ENCODE measurements at regions of chr17 and their contacts with region 1.

Region 1: GRCh38 chr17:45317112-45317928 is 500 bp upstream of the MAP3K14 start:
- DNase-seq: peak; percentile 98 to 100 (median 99)
- H3K4me3 ChIP-seq: peak overlapping the region; percentile 62 to 94 (median 85)
- H3K27ac ChIP-seq: peak overlapping the region in 56 of 59 donors; percentile 45 to 97 (median 90)
- H3K27me3 ChIP-seq: no peaks in the 10 kb centered on the region
- CTCF ChIP-seq: peak in 28 of 56 donors; percentile 6 to 49 (median 27)

Region 2: DNA sequence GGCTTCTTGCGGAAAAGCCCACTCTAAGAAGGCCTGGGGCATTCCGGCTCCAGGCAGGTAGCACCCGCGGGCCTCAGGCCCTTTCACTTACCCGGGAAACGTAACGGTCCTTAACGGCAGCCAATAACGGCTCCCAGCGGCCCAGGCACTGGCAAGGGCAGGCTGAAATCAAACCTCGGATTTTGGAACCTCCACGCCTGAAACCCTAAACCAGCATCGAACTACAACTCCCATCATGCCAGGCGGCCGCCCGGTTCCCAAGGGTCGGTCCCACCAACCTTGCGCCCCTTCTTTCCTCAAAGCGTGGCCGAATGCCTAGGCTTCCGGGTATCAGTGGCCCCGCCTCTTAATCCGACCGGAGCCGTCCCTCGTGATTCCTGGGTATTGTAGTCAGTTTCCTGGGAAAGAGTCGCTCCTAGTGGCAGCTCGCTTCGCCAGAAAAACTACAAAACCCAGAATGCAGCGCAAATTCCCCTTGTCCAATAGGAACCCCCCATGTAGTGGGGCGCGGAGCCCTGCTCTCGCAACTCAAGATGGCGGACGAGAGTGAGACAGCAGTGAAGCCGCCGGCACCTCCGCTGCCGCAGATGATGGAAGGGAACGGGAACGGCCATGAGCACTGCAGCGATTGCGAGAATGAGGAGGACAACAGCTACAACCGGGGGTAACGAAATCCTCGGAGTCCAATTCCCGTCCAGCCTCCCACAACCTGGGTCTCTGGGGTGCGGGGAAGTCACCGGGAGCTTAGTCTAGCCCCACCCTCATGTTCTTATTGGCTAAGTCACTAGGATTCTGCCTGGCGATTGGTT is 256.3 kb before region 1 on chr17 and contains the start of gene NMT1:
- intact Hi-C with region 1: loop called in 1 of 2 experiments (anchors 10 kb)
- DNase-seq: peak; percentile 96 to 99 (median 99)
- H3K4me3 ChIP-seq: peak within 1 kb of the TSS; percentile 66 to 99 (median 84)
- H3K27ac ChIP-seq: peak within 1 kb of the TSS; percentile 53 to 99 (median 93)
- H3K27me3 ChIP-seq: no peaks in the 10 kb centered on the region
- CTCF ChIP-seq: peak in 41 of 56 donors; percentile 4 to 63 (median 37)
- total RNA-seq, gene NMT1: 111 to 220 (median 159) TPM

Region 3: DNA sequence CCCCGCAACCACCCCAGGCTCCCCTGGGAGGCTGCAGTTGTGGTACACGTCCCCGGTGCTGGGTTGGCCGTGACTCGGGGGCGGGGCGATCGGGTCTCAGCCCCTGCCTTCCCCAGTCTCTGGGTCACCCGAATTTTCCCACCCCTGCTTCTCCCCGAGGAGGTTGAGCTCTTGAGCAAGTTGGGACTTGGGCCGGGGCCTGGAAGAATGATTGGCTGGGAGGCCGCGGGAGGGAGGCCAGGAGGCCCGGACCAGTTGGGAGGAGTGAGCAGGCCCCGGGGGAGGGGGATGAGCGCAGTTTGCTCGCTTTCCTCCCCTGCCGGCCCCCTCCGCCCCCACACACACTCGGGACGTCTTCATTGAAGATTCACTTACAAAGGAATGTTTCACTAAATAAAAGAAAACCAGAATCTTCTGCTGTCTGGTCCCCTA is 173.5 kb before region 1 on chr17:
- intact Hi-C with region 1: no loop called
- DNase-seq: peak in 5 of 10 donors; percentile 44 to 70 (median 61)
- H3K4me3 ChIP-seq: peak overlapping the region; percentile 14 to 71 (median 53)
- H3K27ac ChIP-seq: peak overlapping the region; percentile 25 to 100 (median 89)
- H3K27me3 ChIP-seq: no peaks in the 10 kb centered on the region
- CTCF ChIP-seq: peak in 2 of 56 donors; percentile 5 to 13

Region 4: DNA sequence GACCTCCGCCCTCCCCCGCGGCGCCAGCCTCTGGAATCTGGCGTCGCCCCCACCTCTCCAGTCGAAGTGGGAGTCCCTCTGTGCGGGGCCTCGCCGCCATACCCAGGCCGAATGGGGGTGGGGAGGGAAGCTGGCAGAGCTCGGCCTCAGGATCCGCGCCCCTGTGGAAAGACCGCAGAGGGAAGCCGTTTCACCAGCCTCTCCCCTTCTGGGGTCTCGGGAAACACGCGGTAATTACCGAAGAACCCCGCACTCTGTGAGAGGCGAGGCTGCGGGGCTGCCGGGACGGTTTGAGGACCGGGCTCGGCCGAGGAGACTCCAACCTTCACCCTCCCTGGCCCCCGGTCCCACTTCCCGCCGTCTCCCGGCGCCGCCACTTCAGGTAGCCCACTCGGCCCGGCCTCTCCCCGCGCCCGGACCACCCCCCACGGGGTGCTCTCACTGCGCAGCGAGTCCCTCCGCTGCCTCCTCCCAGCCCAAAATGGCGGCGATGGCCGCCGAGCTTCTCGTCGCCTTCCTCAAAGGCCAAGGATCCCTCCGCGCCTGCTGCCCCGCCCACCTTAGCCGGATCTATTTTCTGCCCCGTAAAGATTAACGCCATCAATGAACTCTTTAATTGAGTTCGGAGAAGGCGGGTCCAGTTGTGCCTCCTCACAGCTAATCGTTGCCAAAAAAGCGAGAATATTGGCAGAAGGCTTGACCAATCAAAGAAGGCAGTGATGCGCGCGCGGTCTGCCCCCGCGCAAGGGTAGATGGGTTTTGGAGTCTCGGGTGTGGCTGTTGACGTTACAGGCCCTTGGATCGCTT is 156.1 kb before region 1 on chr17:
- intact Hi-C with region 1: loop called in 1 of 2 experiments (anchors 10 kb)
- DNase-seq: peak; percentile 98 to 100 (median 99)
- H3K4me3 ChIP-seq: peak overlapping the region; percentile 77 to 100 (median 95)
- H3K27ac ChIP-seq: peak overlapping the region; percentile 98 to 100 (median 100)
- H3K27me3 ChIP-seq: no peaks in the 10 kb centered on the region
- CTCF ChIP-seq: peak in 19 of 56 donors; percentile 3 to 48 (median 22)

Region 5: GRCh38 chr17:45277216-45277849 is 40.0 kb before region 1 on chr17:
- intact Hi-C with region 1: loop called (anchors 2 to 5 kb)
- DNase-seq: peak; percentile 83 to 98 (median 92)
- H3K4me3 ChIP-seq: peak overlapping the region in 9 of 59 donors; percentile 0 to 36 (median 15)
- H3K27ac ChIP-seq: peak overlapping the region in 6 of 59 donors; percentile 2 to 47 (median 35)
- H3K27me3 ChIP-seq: no peaks in the 10 kb centered on the region
- CTCF ChIP-seq: peak; percentile 25 to 90 (median 82)

Region 6: DNA sequence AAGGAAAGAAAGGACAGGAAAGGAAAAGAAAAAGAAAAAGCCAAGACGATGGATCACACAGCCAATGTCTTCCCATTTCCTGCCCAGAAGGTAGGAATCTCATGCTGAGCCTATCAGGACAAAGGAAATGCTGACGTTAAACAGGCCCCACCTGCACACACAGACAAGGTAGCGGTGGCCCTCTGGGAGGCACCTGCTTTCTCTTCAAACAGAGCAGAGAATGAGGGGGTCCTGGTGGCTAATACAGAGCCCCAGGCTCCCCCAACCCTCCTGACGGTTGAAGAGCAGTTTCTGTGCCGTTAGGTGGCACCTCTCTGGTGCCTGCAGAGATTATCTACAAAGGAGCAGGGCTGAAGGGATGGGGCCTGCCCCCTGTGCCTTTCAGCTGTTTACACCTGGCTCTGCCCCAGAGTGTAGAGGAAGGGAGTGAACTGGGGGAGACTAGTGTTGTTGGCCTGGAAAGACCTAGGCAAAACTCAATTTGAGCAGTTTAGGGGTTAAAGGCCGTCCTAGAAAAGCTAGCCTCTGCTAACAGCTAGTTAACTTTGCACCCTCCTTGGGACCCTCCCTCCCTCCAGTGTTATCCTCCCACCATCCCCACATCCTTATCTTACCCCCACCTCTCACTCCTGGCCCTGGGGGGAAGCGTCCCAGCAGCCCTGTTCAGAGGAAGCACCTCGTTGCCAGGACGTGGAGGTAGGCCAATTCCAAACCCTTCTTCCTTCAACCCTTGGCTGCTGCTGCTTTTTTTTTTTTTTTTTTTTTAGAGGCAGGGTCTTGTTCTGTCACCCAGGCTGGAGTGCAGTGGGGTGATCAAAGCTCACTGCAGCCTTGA is 59.1 kb after region 1 on chr17:
- intact Hi-C with region 1: loop called in 1 of 2 experiments (anchors 5 kb)
- DNase-seq: no peak
- H3K4me3 ChIP-seq: no peak overlapping the region
- H3K27ac ChIP-seq: no peak overlapping the region
- H3K27me3 ChIP-seq: peaks cover 0 to 4% (median 0%) of the 10 kb centered on the region in 45 donors
- CTCF ChIP-seq: no peak

Measured in dorsolateral prefrontal cortex (tissue), 120 donors.